ENCODE measurements at regions of chr15 and their contacts with region 1.

Region 1: GRCh38 chr15:62306851-62307504 is 141.9 kb upstream of the C2CD4B start:
- DNase-seq: peak; percentile 70
- H3K4me3 Mint-ChIP-seq: peak overlapping the region; percentile 2
- H3K27ac Mint-ChIP-seq: no peak overlapping the region
- H3K4me1 Mint-ChIP-seq: peaks cover 15% of the 10 kb centered on the region
- H3K27me3 Mint-ChIP-seq: no peaks in the 10 kb centered on the region
- CTCF ChIP-seq: peak; percentile 69

Region 2: DNA sequence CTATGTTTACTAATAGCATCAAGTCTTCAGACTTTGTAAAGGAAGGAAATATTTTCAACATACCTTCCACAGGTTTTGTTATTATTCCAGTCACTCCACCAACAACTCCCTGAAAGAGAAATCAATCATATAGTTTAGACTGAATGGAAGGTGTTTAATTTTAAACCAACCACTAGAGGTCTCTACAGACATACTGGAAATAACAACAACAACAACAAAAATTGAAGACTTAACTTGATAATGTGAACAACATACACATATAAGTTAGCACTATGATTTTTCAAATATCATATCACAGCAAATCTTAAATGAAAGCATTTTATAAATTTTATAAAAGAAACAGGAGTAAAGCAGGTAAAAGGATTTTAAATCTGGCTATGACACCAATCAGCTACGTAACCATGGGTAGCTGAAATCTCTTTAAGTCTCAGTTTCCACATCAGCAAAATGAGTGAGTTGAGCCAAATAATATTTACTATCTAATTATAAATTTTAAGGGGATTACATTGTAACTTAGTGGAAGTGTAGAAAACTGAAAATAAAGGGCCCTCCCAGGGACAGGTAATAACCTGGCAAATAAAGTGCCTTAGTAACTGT is 435.0 kb before region 1 on chr15:
- CTCF ChIA-PET with region 1: no interaction called
- intact Hi-C with region 1: loop called (anchors 2 kb)
- DNase-seq: no peak
- H3K4me3 Mint-ChIP-seq: no peak overlapping the region
- H3K27ac Mint-ChIP-seq: no peak overlapping the region
- H3K4me1 Mint-ChIP-seq: peaks cover 23% of the 10 kb centered on the region
- H3K27me3 Mint-ChIP-seq: no peaks in the 10 kb centered on the region
- CTCF ChIP-seq: peak; percentile 38

Region 3: GRCh38 chr15:62075595-62076282 is 231.2 kb before region 1 on chr15:
- CTCF ChIA-PET with region 1: interaction called, 5 read pairs
- intact Hi-C with region 1: loop called (anchors 5 kb)
- DNase-seq: peak; percentile 80
- H3K4me3 Mint-ChIP-seq: peak overlapping the region; percentile 46
- H3K27ac Mint-ChIP-seq: peak overlapping the region; percentile 68
- H3K4me1 Mint-ChIP-seq: peaks cover 20% of the 10 kb centered on the region
- H3K27me3 Mint-ChIP-seq: no peaks in the 10 kb centered on the region
- CTCF ChIP-seq: no peak

Region 4: GRCh38 chr15:62142731-62143130 is 164.2 kb before region 1 on chr15:
- CTCF ChIA-PET with region 1: no interaction called
- intact Hi-C with region 1: no loop called
- DNase-seq: no peak
- H3K4me3 Mint-ChIP-seq: no peak overlapping the region
- H3K27ac Mint-ChIP-seq: no peak overlapping the region
- H3K4me1 Mint-ChIP-seq: peaks cover 20% of the 10 kb centered on the region
- H3K27me3 Mint-ChIP-seq: no peaks in the 10 kb centered on the region
- CTCF ChIP-seq: peak; percentile 46

Region 5: DNA sequence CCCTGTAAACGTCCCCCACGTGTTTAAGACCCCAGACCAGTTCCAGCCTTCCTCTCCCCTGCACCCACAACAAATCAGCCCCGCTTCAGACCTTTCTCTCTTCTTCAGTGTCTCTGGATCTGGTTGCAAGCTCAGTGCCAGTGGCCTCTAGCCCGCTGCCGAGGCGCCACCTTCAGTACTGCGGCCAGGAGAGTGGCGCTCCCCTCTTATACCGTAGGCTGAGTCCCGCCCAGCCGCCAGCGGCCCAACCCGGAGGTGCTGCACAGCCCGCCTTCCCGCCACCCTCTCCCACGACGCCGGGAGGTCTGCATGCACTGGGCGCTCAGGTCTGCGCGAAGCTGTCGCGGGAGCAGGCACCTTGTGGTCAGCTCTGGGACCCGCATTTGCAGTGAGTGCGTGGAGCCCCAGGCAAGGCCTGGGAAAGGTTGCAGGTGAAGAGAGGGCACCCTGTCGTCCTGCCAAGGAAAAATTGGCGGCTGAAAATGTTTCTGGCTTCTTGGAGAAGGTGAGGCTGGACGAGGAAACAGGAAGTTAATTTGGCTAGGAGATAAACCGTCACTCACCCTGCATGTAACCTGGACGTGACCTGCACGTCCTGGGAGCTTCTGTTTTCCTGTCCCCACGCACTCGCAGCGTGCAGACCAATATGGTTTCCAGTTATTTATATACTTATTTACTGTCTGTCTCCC is 141.7 kb before region 1 on chr15 and contains the start of gene C2CD4B:
- CTCF ChIA-PET with region 1: interaction called, 10 read pairs
- intact Hi-C with region 1: loop called (anchors 5 kb)
- DNase-seq: peak; percentile 97
- H3K4me3 Mint-ChIP-seq: peak within 1 kb of the TSS; percentile 94
- H3K27ac Mint-ChIP-seq: peak within 1 kb of the TSS; percentile 96
- H3K4me1 Mint-ChIP-seq: peaks cover 42% of the 10 kb centered on the region
- H3K27me3 Mint-ChIP-seq: no peaks in the 10 kb centered on the region
- CTCF ChIP-seq: no peak
- total RNA-seq, gene C2CD4B: 18.8 and 29.9 TPM in 2 replicates

Region 6: DNA sequence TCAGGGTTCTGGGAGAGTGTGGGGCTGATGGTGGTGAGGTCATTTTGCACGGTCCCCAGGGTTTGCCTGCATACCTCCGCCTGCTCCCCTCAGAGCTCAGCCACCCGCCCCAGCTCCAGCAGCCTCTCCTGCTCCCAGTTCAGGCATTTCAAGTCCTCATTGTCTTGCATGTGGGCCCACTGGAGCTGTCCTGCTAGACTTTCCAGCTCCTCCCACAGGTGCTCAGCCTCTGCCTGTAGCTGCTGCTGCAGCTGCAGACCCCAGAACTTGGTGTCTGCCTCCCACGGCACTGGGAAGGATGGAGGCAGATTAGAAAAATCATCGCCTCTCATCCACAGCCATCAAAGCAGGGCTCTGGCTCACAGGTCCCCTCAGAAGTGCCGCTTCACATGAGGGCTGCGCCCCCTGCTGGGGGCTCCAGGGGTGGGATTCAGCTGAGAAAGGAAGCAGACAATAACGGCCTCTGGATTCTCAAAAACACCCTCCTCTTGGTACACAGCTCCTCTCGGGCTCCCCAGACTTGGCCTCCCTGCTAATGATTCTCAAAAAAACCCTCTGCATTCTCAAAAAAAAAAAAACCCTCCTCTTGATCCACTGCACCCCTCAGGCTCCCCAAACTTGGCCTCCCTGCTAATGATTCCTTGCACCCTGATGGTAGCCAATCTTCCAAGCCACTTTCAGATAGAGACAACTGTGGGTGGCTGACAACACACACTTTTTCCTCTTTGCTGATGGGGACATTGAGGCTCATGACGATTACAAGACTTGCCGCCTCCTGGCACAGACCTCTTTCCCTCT is 52.6 kb before region 1 on chr15:
- CTCF ChIA-PET with region 1: interaction called, 12 read pairs
- intact Hi-C with region 1: no loop called
- DNase-seq: peak; percentile 93
- H3K4me3 Mint-ChIP-seq: no peak overlapping the region
- H3K27ac Mint-ChIP-seq: no peak overlapping the region
- H3K4me1 Mint-ChIP-seq: peaks cover 33% of the 10 kb centered on the region
- H3K27me3 Mint-ChIP-seq: no peaks in the 10 kb centered on the region
- CTCF ChIP-seq: peak; percentile 94

Region 7: GRCh38 chr15:62792986-62793751 is 486.2 kb after region 1 on chr15:
- CTCF ChIA-PET with region 1: no interaction called
- intact Hi-C with region 1: no loop called
- DNase-seq: no peak
- H3K4me3 Mint-ChIP-seq: no peak overlapping the region
- H3K27ac Mint-ChIP-seq: no peak overlapping the region
- H3K4me1 Mint-ChIP-seq: peaks cover 7% of the 10 kb centered on the region
- H3K27me3 Mint-ChIP-seq: no peaks in the 10 kb centered on the region
- CTCF ChIP-seq: no peak